Naive thymus-derived CD4-positive, alpha-beta T cell (primary cell): ENCODE measurements at regions of chr14 and their contacts with region 1.

Region 1: DNA sequence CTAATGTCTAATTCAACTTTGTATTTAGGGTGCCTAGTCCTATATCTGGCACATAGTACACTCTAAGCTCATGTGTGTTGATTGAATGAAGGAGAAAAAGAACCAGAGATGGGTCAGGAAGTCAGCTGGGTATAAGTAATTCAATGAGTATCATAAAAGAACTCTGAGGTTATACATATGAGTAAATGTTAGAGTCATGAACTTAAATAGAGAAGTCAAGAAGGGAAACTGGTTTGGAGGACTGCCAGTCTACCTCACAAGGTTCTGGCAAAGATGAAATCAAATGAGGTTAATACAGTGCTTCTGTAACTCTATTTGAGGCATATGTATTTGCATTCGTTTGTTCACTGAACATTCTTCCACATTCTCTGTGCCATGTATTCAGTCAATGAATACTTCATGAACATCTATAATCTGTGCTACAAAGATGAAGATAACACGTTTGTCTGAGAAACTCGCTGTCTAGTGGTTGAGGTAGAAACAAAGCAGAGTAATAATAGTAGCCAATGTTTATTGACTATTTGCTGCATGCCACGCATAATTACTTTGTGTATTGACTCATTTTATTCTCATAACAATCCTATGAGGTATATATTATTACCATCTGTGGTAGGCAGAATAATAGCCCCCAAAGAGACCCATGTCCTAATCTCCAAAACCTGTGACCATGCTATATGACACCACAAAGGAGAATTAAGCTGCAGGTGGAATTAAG is 88.9 kb downstream of the PTGER2 start:
- DNase-seq: peak in 6 of 9 donors; percentile 16 to 56 (median 36)
- ATAC-seq: peak; percentile 75
- H3K4me3 ChIP-seq: no peak overlapping the region
- H3K4me3 Mint-ChIP-seq: peak overlapping the region in 5 of 10 donors; percentile 1 to 25 (median 9)
- H3K27ac ChIP-seq: no peak overlapping the region
- H3K27ac Mint-ChIP-seq: peak overlapping the region in 5 of 9 donors; percentile 3 to 85 (median 15)
- H3K4me1 ChIP-seq: peaks cover 45 to 48% of the 10 kb centered on the region in 2 donors
- H3K4me1 Mint-ChIP-seq: peaks cover 31 to 72% (median 61%) of the 10 kb centered on the region in 7 donors
- H3K27me3 ChIP-seq: no peaks in the 10 kb centered on the region
- H3K27me3 Mint-ChIP-seq: peaks cover 0 to 6% (median 0%) of the 10 kb centered on the region in 5 donors

Region 2: DNA sequence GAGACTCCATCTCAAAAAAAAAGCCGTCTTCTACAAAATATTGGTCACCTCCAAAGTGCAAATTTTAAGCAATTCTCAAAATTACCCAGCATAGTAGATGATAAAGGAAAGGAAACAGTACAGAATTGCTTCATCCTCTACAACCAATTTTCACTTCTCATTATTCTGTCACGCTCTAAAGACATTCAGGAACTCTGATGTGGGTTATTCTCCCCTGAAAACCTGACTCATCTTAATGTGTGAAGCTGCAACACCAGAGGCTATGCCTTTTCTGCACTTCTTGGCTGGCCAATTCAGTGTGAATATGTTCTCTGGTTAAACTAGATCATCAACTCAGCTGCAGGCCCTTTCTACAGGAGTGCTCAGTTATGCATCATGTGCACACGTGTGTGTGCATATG is 77.8 kb before region 1 on chr14:
- CTCF ChIA-PET with region 1: no interaction called
- POLR2A ChIA-PET with region 1: no interaction called
- intact Hi-C with region 1: loop called in 1 of 2 experiments (anchors 2 kb)
- DNase-seq: no peak
- ATAC-seq: peak; percentile 84
- H3K4me3 ChIP-seq: no peak overlapping the region
- H3K4me3 Mint-ChIP-seq: peak overlapping the region in 2 of 10 donors; percentile 37 to 86
- H3K27ac ChIP-seq: no peak overlapping the region
- H3K27ac Mint-ChIP-seq: peak overlapping the region in 5 of 9 donors; percentile 16 to 86 (median 31)
- H3K4me1 ChIP-seq: peaks cover 0 to 63% of the 10 kb centered on the region in 2 donors
- H3K4me1 Mint-ChIP-seq: peaks cover 9 to 88% (median 20%) of the 10 kb centered on the region in 7 donors
- H3K27me3 ChIP-seq: no peaks in the 10 kb centered on the region
- H3K27me3 Mint-ChIP-seq: peaks cover 0 to 2% (median 0%) of the 10 kb centered on the region in 5 donors

Region 3: GRCh38 chr14:52413729-52414408 is 10.9 kb after region 1 on chr14:
- CTCF ChIA-PET with region 1: interaction called, 3 read pairs
- POLR2A ChIA-PET with region 1: interaction called, 4 read pairs
- intact Hi-C with region 1: loop called in 1 of 2 experiments (anchors 1 kb)
- DNase-seq: no peak
- ATAC-seq: no peak
- H3K4me3 ChIP-seq: no peak overlapping the region
- H3K4me3 Mint-ChIP-seq: peak overlapping the region in 2 of 10 donors; percentile 13 to 74
- H3K27ac ChIP-seq: no peak overlapping the region
- H3K27ac Mint-ChIP-seq: peak overlapping the region in 2 of 9 donors; percentile 29 to 90
- H3K4me1 ChIP-seq: no peaks in the 10 kb centered on the region
- H3K4me1 Mint-ChIP-seq: peaks cover 0 to 65% (median 6%) of the 10 kb centered on the region in 7 donors
- H3K27me3 ChIP-seq: no peaks in the 10 kb centered on the region
- H3K27me3 Mint-ChIP-seq: no peaks in the 10 kb centered on the region

Region 4: DNA sequence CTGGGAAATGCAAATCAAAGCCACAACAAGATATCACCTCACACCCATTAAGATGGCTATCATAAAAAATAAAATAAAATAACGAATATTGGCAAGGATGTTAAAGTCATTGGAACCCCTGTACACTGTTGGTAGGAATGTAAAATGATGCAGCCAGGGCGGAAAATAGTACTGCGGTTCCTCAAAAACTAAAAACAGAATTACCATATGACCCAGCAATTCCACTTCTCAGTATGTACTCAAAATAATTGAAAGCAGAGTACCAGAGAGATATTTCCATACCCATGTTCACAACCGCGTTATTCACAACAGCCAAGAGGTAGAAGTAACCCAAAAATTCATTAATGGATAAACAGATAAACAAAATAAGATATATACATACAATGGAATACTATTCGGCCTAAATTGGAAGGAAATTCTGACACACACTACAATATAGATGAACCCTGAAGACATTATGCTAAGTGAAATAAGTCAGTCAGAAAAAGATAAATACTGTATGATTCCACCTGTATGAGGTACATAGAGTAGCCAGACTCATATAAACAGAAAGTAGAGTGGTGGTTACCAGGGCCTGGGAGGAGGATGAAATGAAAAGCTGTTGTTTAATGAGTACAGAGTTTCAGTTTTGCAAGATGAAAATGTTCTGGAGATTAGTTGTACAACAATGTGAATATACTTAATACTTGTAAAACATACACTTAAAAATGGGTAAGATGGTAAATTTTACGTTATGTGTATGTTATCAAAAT is 64.7 kb after region 1 on chr14:
- CTCF ChIA-PET with region 1: no interaction called
- POLR2A ChIA-PET with region 1: no interaction called
- intact Hi-C with region 1: loop called in 1 of 2 experiments (anchors 5 kb)
- DNase-seq: no peak
- ATAC-seq: no peak
- H3K4me3 ChIP-seq: no peak overlapping the region
- H3K4me3 Mint-ChIP-seq: peak overlapping the region in 1 of 10 donors; percentile 4
- H3K27ac ChIP-seq: no peak overlapping the region
- H3K27ac Mint-ChIP-seq: peak overlapping the region in 3 of 9 donors; percentile 21 to 53 (median 34)
- H3K4me1 ChIP-seq: no peaks in the 10 kb centered on the region
- H3K4me1 Mint-ChIP-seq: peaks cover 5 to 41% (median 14%) of the 10 kb centered on the region in 7 donors
- H3K27me3 ChIP-seq: no peaks in the 10 kb centered on the region
- H3K27me3 Mint-ChIP-seq: no peaks in the 10 kb centered on the region

Region 5: DNA sequence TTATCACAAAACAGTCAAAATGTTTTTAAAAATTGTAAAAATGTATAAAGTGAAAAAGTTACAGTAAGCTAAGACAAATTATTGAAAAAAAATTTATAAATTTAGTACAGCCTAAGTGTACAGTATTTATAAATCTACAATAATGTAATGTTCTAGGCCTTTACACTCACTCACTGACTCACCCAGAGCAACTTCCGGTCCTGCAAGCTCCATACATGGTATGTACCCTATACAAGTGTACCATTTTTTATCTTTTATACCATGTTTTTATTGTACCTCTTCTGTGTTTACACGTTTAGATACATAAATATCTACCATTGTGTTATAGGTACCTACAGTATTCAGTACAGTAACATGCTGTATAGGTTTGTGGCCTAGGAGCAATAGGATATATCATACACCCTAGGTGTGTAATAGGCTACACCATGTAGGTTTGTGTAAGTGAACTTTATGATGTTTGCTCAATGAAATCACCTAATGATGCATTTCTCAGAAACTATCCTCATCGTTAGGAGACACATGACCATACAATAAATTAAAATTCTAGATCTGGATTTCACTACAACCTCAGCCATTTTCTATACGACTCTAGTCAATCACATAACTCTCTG is 82.5 kb after region 1 on chr14:
- CTCF ChIA-PET with region 1: no interaction called
- POLR2A ChIA-PET with region 1: no interaction called
- intact Hi-C with region 1: no loop called
- DNase-seq: no peak
- ATAC-seq: no peak
- H3K4me3 ChIP-seq: no peak overlapping the region
- H3K4me3 Mint-ChIP-seq: no peak overlapping the region
- H3K27ac ChIP-seq: no peak overlapping the region
- H3K27ac Mint-ChIP-seq: no peak overlapping the region
- H3K4me1 ChIP-seq: no peaks in the 10 kb centered on the region
- H3K4me1 Mint-ChIP-seq: peaks cover 0 to 9% (median 3%) of the 10 kb centered on the region in 7 donors
- H3K27me3 ChIP-seq: no peaks in the 10 kb centered on the region
- H3K27me3 Mint-ChIP-seq: no peaks in the 10 kb centered on the region